ENCODE measurements at regions of chr4 and their contacts with region 1.

Region 1: GRCh38 chr4:57055886-57056285 is 54.3 kb downstream of the IGFBP7 start:
- DNase-seq: no peak
- ATAC-seq: no peak
- H3K4me3 ChIP-seq: no peak overlapping the region
- H3K27ac ChIP-seq: no peak overlapping the region
- H3K4me1 ChIP-seq: no peaks in the 10 kb centered on the region
- H3K27me3 ChIP-seq: peaks cover 30% of the 10 kb centered on the region
- CTCF ChIP-seq: no peak
- POLR2A ChIP-seq: no peak
- RAD21 ChIP-seq: no peak

Region 2: DNA sequence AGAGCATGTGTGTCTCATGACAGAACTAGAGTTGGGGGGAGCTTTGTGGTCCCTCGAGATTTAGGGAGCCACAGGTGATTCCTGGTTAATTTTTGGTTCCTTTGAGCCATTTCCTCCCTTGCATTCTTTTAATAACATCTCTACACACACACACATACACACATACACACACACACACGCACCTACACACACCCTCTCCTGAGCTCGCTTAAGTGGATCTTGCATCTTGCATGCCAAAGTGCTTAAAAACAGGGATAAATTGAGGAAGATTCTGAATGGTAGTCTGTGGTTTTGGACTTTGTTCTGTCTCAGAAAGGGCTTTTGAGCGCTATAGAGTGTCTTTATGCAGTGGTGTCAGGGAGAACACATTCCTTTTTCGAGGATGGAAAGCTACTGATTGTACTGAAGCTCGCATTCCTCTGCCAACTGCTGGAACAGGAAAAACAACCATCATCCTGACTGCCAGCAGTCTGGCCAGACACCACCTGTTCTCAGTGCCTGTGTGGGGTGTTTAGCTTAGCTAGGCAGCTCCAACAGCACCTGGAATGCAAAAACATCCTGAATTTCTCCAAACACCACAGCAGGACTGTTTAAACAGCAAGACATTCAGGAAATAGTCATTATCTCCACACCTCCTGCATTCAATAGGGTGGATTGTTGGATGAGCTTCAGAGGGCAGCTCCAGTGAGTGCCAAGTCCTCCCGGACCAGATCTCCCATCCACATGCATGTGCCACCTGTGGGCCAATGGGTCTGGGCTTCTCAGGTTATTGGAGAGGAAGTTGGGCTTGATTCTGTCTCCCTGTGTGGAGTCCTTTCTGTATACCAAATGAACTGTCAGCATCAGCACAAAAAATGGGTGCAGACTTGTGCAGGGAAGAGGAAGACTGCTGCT is 76.2 kb after region 1 on chr4:
- CTCF ChIA-PET with region 1: no interaction called
- POLR2A ChIA-PET with region 1: no interaction called
- RAD21 ChIA-PET with region 1: no interaction called
- intact Hi-C with region 1: loop called (anchors 5 kb)
- DNase-seq: no peak
- ATAC-seq: no peak
- H3K4me3 ChIP-seq: no peak overlapping the region
- H3K27ac ChIP-seq: no peak overlapping the region
- H3K4me1 ChIP-seq: no peaks in the 10 kb centered on the region
- H3K27me3 ChIP-seq: peaks cover 31% of the 10 kb centered on the region
- CTCF ChIP-seq: no peak
- POLR2A ChIP-seq: no peak
- RAD21 ChIP-seq: no peak

Measured in HCT116 (cell line).